Mammary epithelial cell (primary cell): ENCODE measurements at regions of chr1 and their contacts with region 1.

Region 1: GRCh38 chr1:116842654-116843053 is 67.1 kb upstream of the PTGFRN start:
- DNase-seq: no peak
- H3K4me3 ChIP-seq: no peak overlapping the region
- H3K27ac ChIP-seq: no peak overlapping the region
- H3K4me1 ChIP-seq: no peaks in the 10 kb centered on the region
- H3K27me3 ChIP-seq: no peaks in the 10 kb centered on the region
- CTCF ChIP-seq: peak in 1 of 2 donors; percentile 50

Region 2: GRCh38 chr1:116748272-116748671 is 94.4 kb before region 1 on chr1:
- CTCF ChIA-PET with region 1: no interaction called
- dilution Hi-C with region 1: loop called (anchors 5 kb)
- in situ Hi-C with region 1: no loop called
- intact Hi-C with region 1: no loop called
- DNase-seq: no peak
- H3K4me3 ChIP-seq: no peak overlapping the region
- H3K27ac ChIP-seq: no peak overlapping the region
- H3K4me1 ChIP-seq: no peaks in the 10 kb centered on the region
- H3K27me3 ChIP-seq: no peaks in the 10 kb centered on the region
- CTCF ChIP-seq: no peak

Region 3: GRCh38 chr1:116927049-116927798 is 84.6 kb after region 1 on chr1:
- CTCF ChIA-PET with region 1: interaction called, 14 read pairs
- dilution Hi-C with region 1: no loop called
- in situ Hi-C with region 1: no loop called
- intact Hi-C with region 1: no loop called
- DNase-seq: no peak
- H3K4me3 ChIP-seq: no peak overlapping the region
- H3K27ac ChIP-seq: no peak overlapping the region
- H3K4me1 ChIP-seq: peaks cover 19% of the 10 kb centered on the region
- H3K27me3 ChIP-seq: no peaks in the 10 kb centered on the region
- CTCF ChIP-seq: no peak